CD8-positive, alpha-beta memory T cell (primary cell): ENCODE measurements at regions of chr16 and their contacts with region 1.

Region 1: GRCh38 chr16:180938-181667 is 844 bp downstream of the HBQ1 start:
- DNase-seq: peak; percentile 78 to 87 (median 80)
- H3K4me3 ChIP-seq: peak overlapping the region; percentile 45
- H3K4me3 Mint-ChIP-seq: peak overlapping the region in 2 of 7 donors; percentile 56 to 65
- H3K27ac ChIP-seq: no peak overlapping the region
- H3K27ac Mint-ChIP-seq: no peak overlapping the region
- H3K4me1 ChIP-seq: peaks cover 9% of the 10 kb centered on the region
- H3K4me1 Mint-ChIP-seq: peaks cover 0 to 14% (median 2%) of the 10 kb centered on the region in 3 donors
- H3K27me3 ChIP-seq: peaks cover 23% of the 10 kb centered on the region
- H3K27me3 Mint-ChIP-seq: peaks cover 18 to 25% of the 10 kb centered on the region in 2 donors

Region 2: GRCh38 chr16:106623-107324 is 74.3 kb before region 1 on chr16:
- CTCF ChIA-PET with region 1: interaction called, 21 read pairs
- POLR2A ChIA-PET with region 1: interaction called, 6 read pairs
- DNase-seq: peak; percentile 33 to 70 (median 57)
- H3K4me3 ChIP-seq: no peak overlapping the region
- H3K4me3 Mint-ChIP-seq: no peak overlapping the region
- H3K27ac ChIP-seq: no peak overlapping the region
- H3K27ac Mint-ChIP-seq: no peak overlapping the region
- H3K4me1 ChIP-seq: no peaks in the 10 kb centered on the region
- H3K4me1 Mint-ChIP-seq: peaks cover 4 to 5% (median 5%) of the 10 kb centered on the region in 3 donors
- H3K27me3 ChIP-seq: no peaks in the 10 kb centered on the region
- H3K27me3 Mint-ChIP-seq: no peaks in the 10 kb centered on the region

Region 3: DNA sequence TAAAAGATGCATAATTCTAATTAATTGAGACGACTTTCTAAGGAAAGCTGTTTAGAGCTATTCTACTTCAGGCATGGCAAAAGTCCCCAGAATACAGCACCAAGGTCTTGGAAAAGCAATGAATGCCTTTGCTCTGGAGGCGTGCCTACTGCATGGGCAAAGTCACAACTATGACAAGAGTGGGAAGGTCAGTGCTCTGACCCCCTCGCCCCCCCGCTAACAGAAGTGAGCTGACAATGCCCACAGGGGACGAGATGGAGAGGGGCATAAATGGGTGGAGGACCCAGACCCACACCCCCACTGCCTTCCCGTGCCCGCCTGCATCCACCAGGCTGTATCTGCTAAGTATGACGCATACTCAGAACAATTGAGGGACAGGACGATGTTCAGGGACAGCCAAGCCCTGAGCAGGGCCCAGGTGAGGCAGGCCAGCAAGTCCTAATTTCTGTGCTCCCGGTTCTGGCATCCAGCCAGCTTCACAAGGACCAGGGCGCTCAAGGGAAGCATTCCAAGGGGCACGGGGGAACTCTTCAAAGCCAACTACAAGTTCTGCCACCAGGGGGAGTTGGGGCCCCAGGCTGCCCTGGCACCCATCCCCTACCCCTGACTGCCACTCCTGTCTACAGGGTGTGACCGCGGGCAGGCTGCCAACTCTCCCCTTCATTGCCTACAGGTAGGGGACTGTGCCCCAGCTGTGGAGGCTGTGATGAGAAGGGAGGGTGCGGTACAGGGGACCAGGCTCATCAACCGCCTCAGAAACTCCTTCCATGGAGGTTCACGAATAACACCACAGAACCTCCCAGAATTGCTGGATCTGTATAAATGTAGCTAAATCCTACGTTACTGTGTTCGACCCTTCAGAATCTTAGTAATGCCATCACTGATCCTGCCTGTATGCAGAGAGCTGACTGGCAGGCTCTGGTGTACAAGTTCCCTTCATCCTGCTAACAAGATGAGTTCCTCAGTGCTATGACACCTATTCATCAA is 63.4 kb before region 1 on chr16:
- CTCF ChIA-PET with region 1: interaction called, 14 read pairs
- POLR2A ChIA-PET with region 1: no interaction called
- DNase-seq: peak; percentile 52 to 73 (median 59)
- H3K4me3 ChIP-seq: no peak overlapping the region
- H3K4me3 Mint-ChIP-seq: no peak overlapping the region
- H3K27ac ChIP-seq: no peak overlapping the region
- H3K27ac Mint-ChIP-seq: peak overlapping the region in 2 of 8 donors; percentile 17 to 54
- H3K4me1 ChIP-seq: no peaks in the 10 kb centered on the region
- H3K4me1 Mint-ChIP-seq: peaks cover under 1 to 13% (median 8%) of the 10 kb centered on the region in 3 donors
- H3K27me3 ChIP-seq: no peaks in the 10 kb centered on the region
- H3K27me3 Mint-ChIP-seq: no peaks in the 10 kb centered on the region

Region 4: DNA sequence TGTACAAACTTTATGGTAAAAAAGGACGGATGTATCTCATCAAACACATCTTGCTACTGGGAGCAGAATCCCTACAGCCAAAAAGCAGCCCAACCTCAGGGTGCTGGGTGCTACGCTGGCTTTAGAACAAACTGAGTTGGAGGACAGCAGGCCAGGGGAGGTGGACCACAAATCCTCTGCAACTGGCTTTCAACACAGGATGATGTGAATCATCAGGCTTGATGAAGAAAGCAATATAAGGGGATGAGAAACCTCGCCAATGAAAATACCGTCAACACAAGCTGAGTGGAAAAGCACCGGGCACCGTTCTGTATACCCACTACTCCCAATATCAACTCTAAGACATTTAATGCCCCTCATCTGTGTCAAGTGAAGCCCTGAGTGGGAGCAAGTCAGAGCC is 13.4 kb after region 1 on chr16:
- CTCF ChIA-PET with region 1: interaction called, 18 read pairs
- POLR2A ChIA-PET with region 1: no interaction called
- DNase-seq: no peak
- H3K4me3 ChIP-seq: no peak overlapping the region
- H3K4me3 Mint-ChIP-seq: no peak overlapping the region
- H3K27ac ChIP-seq: no peak overlapping the region
- H3K27ac Mint-ChIP-seq: peak overlapping the region in 1 of 8 donors; percentile 47
- H3K4me1 ChIP-seq: no peaks in the 10 kb centered on the region
- H3K4me1 Mint-ChIP-seq: no peaks in the 10 kb centered on the region
- H3K27me3 ChIP-seq: no peaks in the 10 kb centered on the region
- H3K27me3 Mint-ChIP-seq: no peaks in the 10 kb centered on the region

Region 5: GRCh38 chr16:234468-235305 is 53.6 kb after region 1 on chr16 and contains the start of gene FAM234A:
- CTCF ChIA-PET with region 1: no interaction called
- POLR2A ChIA-PET with region 1: no interaction called
- DNase-seq: peak; percentile 92 to 97 (median 95)
- H3K4me3 ChIP-seq: peak within 1 kb of the TSS; percentile 74
- H3K4me3 Mint-ChIP-seq: peak within 1 kb of the TSS; percentile 93 to 98 (median 96)
- H3K27ac ChIP-seq: peak within 1 kb of the TSS; percentile 94
- H3K27ac Mint-ChIP-seq: peak within 1 kb of the TSS; percentile 99 to 100 (median 99)
- H3K4me1 ChIP-seq: peaks cover 5% of the 10 kb centered on the region
- H3K4me1 Mint-ChIP-seq: peaks cover 14 to 24% (median 18%) of the 10 kb centered on the region in 3 donors
- H3K27me3 ChIP-seq: no peaks in the 10 kb centered on the region
- H3K27me3 Mint-ChIP-seq: no peaks in the 10 kb centered on the region
- total RNA-seq, gene FAM234A: 23.1 to 26.1 TPM